Activated CD4-positive, alpha-beta T cell treated with anti-CD3 and anti-CD28 coated beads, Interleukin-2, amount 10 ng/mL, durations not matched to agents 24 days and 14 days (primary cell): ENCODE measurements at regions of chr3 and their contacts with region 1.

Region 1: GRCh38 chr3:37400945-37401344 is 226.6 kb upstream of the LRRFIP2 start:
- DNase-seq: no peak
- H3K4me3 Mint-ChIP-seq: no peak overlapping the region
- H3K27ac Mint-ChIP-seq: no peak overlapping the region
- H3K4me1 Mint-ChIP-seq: no peaks in the 10 kb centered on the region
- H3K27me3 Mint-ChIP-seq: no peaks in the 10 kb centered on the region

Region 2: DNA sequence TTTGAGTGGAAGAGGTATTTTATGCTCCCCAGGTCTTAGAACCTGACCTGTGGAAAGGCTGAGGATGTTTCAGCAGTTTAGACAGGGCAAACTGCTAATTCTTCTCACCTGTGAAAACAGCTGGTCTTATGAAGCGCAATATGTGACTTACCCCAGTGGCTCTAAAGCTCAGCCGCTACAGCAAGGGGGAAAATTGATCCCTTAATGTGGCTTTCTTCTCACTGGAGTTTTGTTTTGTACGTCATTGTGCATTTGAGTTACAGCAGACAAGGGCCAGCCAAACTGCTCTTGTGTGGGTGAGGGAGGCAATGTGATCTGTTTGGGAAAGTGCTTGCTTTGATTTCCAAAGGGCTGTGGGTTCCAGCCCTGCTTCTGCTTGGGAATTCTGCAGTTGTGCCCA is 66.8 kb after region 1 on chr3:
- intact Hi-C with region 1: loop called (anchors 2 kb)
- DNase-seq: no peak
- H3K4me3 Mint-ChIP-seq: no peak overlapping the region
- H3K27ac Mint-ChIP-seq: no peak overlapping the region
- H3K4me1 Mint-ChIP-seq: no peaks in the 10 kb centered on the region
- H3K27me3 Mint-ChIP-seq: peaks cover 21% of the 10 kb centered on the region

Region 3: DNA sequence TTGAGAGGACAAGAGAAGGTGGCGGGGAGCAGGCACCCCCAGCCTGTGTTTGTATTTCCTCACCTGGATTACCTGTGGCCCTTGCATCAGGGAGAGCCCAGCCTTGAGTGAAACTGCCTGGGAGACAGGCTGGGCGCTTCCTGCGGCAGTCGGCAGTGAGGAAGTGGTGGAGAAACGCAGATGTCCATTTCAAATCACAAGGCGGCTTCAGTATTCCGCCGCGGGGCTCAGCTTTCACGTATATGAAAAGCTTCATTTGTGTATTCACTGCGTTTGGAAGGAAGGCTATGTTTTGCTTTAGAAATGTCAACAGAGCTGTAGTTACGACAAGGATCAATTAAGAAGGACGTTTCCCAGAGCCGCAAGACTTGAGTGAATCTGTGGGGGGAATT is 293.3 kb after region 1 on chr3:
- intact Hi-C with region 1: no loop called
- DNase-seq: no peak
- H3K4me3 Mint-ChIP-seq: no peak overlapping the region
- H3K27ac Mint-ChIP-seq: no peak overlapping the region
- H3K4me1 Mint-ChIP-seq: no peaks in the 10 kb centered on the region
- H3K27me3 Mint-ChIP-seq: peaks cover 2% of the 10 kb centered on the region